Endothelial cell of umbilical vein (primary cell): ENCODE measurements at regions of chr11 and their contacts with region 1.

Region 1: DNA sequence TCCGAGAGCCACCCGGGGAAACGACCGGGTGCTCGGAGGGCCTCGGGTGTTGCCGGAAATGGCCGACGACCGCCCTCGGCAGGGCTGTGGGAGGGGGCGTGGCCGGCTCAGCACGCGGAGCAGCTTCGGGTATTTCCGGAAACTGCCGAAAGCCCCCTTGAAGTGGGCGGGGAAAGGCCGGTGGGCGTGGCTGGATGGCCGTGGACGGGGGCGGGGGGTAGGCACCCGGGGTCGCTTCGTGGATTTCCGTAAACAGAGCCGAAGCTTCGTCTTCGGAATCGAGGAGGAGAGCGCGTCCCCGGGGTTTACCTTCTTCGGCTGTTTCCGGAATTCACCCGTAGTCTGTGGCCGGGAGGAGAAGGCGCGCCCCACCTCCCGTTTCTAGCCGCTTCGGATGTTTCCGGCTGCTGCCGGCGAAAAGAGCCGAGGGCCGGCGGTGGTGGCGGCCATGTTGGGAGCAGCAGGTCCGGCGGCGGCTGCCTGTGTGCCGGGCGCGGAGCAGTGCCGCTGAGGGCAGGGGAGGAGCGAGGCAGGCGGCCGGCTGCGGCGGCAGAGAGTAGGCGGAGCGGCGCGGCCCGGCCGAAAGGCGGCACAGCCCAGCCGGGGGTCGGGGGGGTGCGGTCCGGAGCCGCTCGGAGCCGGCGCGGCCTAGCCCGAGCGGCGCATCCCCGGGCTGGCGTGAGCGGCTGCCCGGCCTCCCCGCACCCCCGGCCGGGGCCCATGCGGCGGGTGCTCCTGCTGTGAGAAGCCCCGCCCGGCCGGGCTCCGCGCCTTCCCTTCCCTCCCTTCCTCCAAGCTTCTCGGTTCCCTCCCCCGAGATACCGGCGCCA is at the start of gene MARK2:
- DNase-seq: peak; percentile 96
- H3K4me3 ChIP-seq: peak within 1 kb of the TSS; percentile 70 to 87 (median 85)
- H3K27ac ChIP-seq: peak within 1 kb of the TSS; percentile 61
- H3K4me1 ChIP-seq: peaks cover 26% of the 10 kb centered on the region
- H3K27me3 ChIP-seq: no peaks in the 10 kb centered on the region
- CTCF ChIP-seq: no peak
- POLR2A ChIP-seq: peak; percentile 72
- total RNA-seq, gene MARK2: 33.4 and 34.7 TPM in 2 replicates

Region 2: DNA sequence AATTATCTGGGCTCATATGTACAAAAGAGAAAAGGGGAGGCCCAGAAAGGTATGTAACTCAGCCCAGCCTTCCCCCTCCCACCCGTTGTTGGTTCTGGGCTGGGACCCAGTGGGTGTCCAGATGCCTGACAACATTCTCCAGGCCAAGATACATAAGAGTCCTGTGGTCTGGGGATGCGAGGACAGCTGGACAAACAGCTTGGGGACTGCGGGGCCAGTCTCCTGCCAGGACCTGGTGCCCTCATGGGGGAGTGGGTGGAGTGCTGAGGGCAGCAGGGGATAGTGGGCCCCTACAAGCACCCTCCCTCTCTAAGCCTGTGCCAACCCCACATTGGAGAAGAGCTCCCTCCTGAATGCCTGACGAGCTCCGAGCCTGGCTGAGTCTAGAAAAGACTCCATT is 850.6 kb before region 1 on chr11:
- CTCF ChIA-PET with region 1: no interaction called
- POLR2A ChIA-PET with region 1: no interaction called
- dilution Hi-C with region 1: no loop called
- intact Hi-C with region 1: no loop called
- DNase-seq: no peak
- H3K4me3 ChIP-seq: no peak overlapping the region
- H3K27ac ChIP-seq: no peak overlapping the region
- H3K4me1 ChIP-seq: no peaks in the 10 kb centered on the region
- H3K27me3 ChIP-seq: peaks cover 0 to 2% of the 10 kb centered on the region in 2 experiments
- CTCF ChIP-seq: no peak
- POLR2A ChIP-seq: no peak

Region 3: DNA sequence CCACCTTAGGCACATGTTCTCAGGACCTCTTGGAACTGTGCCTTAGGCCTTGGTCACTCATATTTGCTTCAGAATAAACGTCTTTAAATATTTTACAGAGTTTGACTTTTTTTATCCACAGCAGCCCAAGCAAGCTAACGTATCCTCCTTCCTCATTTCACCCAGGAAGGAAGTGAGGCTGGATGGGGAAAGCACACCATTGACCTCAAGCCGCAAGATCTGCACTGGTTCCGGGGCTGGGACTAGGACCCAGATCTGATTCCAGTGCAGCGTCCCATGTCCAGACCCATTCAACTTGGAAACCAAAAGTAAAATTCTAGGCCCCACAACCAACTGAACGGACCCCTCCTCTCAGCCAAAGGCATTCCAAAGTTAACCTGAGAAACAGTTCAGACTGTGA is 335.4 kb before region 1 on chr11:
- CTCF ChIA-PET with region 1: no interaction called
- POLR2A ChIA-PET with region 1: no interaction called
- dilution Hi-C with region 1: no loop called
- intact Hi-C with region 1: no loop called
- DNase-seq: no peak
- H3K4me3 ChIP-seq: no peak overlapping the region
- H3K27ac ChIP-seq: no peak overlapping the region
- H3K4me1 ChIP-seq: no peaks in the 10 kb centered on the region
- H3K27me3 ChIP-seq: peaks cover 0 to 13% of the 10 kb centered on the region in 2 experiments
- CTCF ChIP-seq: no peak
- POLR2A ChIP-seq: no peak

Region 4: GRCh38 chr11:63768237-63769043 is 70.5 kb before region 1 on chr11 and contains the start of gene ZFTA:
- CTCF ChIA-PET with region 1: interaction called, 25 read pairs
- POLR2A ChIA-PET with region 1: interaction called, 3 read pairs
- dilution Hi-C with region 1: no loop called
- intact Hi-C with region 1: loop called (anchors 1 kb)
- DNase-seq: peak; percentile 41
- H3K4me3 ChIP-seq: peak within 1 kb of the TSS; percentile 84 to 91 (median 87)
- H3K27ac ChIP-seq: peak within 1 kb of the TSS; percentile 64
- H3K4me1 ChIP-seq: peaks cover 18% of the 10 kb centered on the region
- H3K27me3 ChIP-seq: peaks cover 3 to 6% of the 10 kb centered on the region in 2 experiments
- CTCF ChIP-seq: peak; percentile 58 to 88
- POLR2A ChIP-seq: peak; percentile 53
- total RNA-seq, gene ZFTA: 25.2 and 32.0 TPM in 2 replicates

Region 5: GRCh38 chr11:63871962-63872799 is 33.3 kb after region 1 on chr11:
- CTCF ChIA-PET with region 1: interaction called, 52 read pairs
- POLR2A ChIA-PET with region 1: no interaction called
- dilution Hi-C with region 1: no loop called
- intact Hi-C with region 1: loop called (anchors 1 kb)
- DNase-seq: peak; percentile 81
- H3K4me3 ChIP-seq: no peak overlapping the region
- H3K27ac ChIP-seq: no peak overlapping the region
- H3K4me1 ChIP-seq: peaks cover 17% of the 10 kb centered on the region
- H3K27me3 ChIP-seq: no peaks in the 10 kb centered on the region
- CTCF ChIP-seq: peak; percentile 25 to 31
- POLR2A ChIP-seq: no peak

Region 6: DNA sequence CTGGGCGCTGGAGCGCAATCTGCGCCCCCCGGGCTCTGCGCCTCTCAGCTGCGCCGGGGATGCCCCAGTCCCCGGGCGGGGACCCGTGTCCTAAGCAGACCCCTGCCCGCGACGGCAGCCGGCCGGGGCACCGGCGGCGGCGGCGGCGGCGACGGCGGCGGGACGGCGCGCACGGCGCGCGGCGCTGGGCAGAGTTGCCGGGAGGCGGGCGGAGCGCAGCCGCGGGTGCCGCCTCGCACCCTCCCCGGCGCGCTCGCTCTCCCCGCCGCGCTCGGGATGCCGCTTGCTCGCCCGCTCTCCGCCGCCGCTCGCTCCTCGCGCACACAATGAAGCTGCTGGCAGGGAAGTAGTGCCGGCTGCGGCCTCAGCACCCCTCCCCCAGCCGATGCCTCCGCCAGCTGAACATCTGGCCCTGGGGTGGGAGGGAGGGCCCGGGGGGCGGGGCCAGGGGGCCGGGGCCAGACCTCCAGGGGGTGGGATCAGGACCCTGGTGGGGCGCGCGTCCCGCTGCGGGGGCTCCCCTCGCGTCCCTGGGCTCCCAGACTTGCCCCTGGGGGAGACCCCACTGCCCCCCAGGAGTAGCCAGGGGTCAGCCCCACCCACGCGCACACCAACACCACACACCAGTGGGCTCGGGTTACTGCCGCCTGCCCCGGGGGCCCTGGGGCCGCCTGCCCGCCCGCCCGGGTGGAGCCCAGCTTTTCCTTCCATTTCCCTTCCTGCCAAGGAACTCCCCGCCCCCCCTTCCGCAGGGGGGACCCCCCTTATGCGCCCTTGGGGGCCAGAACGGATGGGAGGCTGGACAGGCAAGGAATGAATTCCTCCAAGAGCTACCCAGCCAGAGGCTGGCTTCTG is 78.2 kb after region 1 on chr11 and contains the start of gene RCOR2:
- CTCF ChIA-PET with region 1: interaction called, 16 read pairs
- POLR2A ChIA-PET with region 1: interaction called, 3 read pairs
- dilution Hi-C with region 1: no loop called
- intact Hi-C with region 1: loop called (anchors 1 kb)
- DNase-seq: peak; percentile 52
- H3K4me3 ChIP-seq: peak within 1 kb of the TSS; percentile 25 to 34 (median 32)
- H3K27ac ChIP-seq: no peak within 1 kb of the TSS
- H3K4me1 ChIP-seq: peaks cover 7% of the 10 kb centered on the region
- H3K27me3 ChIP-seq: peaks cover 0 to 4% of the 10 kb centered on the region in 2 experiments
- CTCF ChIP-seq: no peak
- POLR2A ChIP-seq: no peak
- total RNA-seq, gene RCOR2: 0.13 and 1.7 TPM in 2 replicates

Region 7: GRCh38 chr11:63945477-63946163 is 106.7 kb after region 1 on chr11:
- CTCF ChIA-PET with region 1: interaction called, 264 read pairs
- POLR2A ChIA-PET with region 1: no interaction called
- dilution Hi-C with region 1: no loop called
- intact Hi-C with region 1: loop called (anchors 1 kb)
- DNase-seq: peak; percentile 68
- H3K4me3 ChIP-seq: no peak overlapping the region
- H3K27ac ChIP-seq: no peak overlapping the region
- H3K4me1 ChIP-seq: no peaks in the 10 kb centered on the region
- H3K27me3 ChIP-seq: no peaks in the 10 kb centered on the region
- CTCF ChIP-seq: peak; percentile 50 to 60
- POLR2A ChIP-seq: no peak

Region 8: GRCh38 chr11:64207256-64208085 is 368.6 kb after region 1 on chr11:
- CTCF ChIA-PET with region 1: no interaction called
- POLR2A ChIA-PET with region 1: no interaction called
- dilution Hi-C with region 1: no loop called
- intact Hi-C with region 1: no loop called
- DNase-seq: peak; percentile 76
- H3K4me3 ChIP-seq: peak overlapping the region; percentile 6 to 42 (median 18)
- H3K27ac ChIP-seq: peak overlapping the region; percentile 91
- H3K4me1 ChIP-seq: peaks cover 34% of the 10 kb centered on the region
- H3K27me3 ChIP-seq: no peaks in the 10 kb centered on the region
- CTCF ChIP-seq: no peak
- POLR2A ChIP-seq: peak; percentile 68